AG04450 (cell line): ENCODE measurements at regions of chr2 and their contacts with region 1.

Region 1: DNA sequence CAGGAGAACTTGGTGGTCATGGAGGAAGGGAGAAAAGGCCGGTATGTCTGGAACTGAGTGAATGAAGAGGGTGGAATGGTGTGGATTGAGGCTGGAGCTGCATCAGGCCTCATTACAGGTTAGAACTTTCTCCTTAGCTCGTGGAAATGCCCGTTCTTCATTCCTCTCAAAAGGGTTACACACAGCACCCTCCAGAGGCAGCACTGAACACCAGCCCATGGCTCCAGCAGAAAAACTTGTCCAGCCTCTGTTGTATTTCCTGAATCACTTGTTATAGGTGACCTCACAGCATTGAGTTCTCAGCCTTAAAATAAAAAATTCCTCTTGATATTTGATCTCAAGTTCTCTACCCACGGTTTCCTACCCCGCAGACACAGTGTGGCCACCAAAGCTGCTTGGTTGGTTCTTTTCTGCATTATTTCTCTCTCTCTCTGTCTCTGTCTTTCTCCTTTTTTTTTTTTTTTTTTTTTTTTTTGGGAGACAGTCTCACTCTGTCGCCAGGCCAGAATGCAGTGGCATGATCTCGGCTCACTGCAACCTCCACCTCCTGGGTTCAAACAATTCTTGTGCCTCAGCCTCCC is 89.6 kb downstream of the ITGB1BP1 start:
- DNase-seq: peak; percentile 70
- H3K4me3 ChIP-seq: no peak overlapping the region
- H3K27ac ChIP-seq: peak overlapping the region; percentile 33
- H3K27me3 ChIP-seq: no peaks in the 10 kb centered on the region
- CTCF ChIP-seq: peak; percentile 84

Region 2: DNA sequence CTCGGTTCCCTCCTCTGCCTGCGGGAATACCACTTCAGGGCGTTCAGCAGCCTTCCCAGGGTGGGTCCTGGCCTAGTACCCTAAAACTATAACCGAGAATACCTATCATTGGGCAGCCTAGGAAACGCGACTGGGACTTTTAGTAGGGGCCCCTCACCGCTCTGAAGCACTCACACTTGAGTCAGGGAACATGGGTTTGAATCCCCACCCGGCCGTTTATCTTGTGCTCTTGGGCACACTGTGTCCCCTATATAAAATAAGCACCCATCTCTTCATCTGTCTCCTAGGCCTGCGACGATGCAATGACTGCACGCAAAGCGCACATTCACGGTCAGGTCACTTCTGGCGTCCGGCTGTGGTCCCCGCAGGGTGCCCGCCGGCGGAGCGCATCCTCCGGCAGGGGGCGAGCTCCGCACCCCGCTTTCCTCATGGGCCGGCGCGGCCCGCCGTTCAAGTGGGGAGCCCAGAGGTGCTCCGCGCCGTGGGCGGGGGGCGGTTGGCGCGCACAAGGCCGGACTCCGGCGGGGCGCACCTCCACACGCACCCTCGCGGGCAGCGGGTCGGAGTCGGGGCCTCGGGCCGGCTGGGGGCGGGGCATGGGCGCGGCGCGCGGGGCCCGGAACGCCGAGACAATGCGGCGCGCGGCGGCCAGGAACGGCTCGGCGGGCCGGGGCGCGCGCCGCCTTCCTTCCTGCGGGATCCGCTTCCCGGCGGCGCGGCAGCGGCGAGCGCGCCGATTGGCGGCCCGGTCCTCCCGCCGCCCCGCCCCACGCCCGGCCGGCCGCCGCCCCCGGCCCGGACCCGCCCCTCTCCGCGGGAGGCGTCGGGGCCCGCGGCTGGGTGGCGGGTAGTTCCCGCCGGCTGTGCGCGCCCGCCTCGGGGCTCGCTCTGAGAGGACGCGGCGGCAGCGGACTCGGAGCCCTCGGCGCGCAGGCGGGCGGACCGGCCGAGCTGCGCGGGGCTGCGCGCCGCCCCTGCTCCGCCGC is 127.4 kb before region 1 on chr2 and contains the start of gene ASAP2:
- CTCF ChIA-PET with region 1: interaction called, 11 read pairs
- POLR2A ChIA-PET with region 1: interaction called, 5 read pairs
- DNase-seq: no peak
- H3K4me3 ChIP-seq: peak within 1 kb of the TSS; percentile 81
- H3K27ac ChIP-seq: no peak within 1 kb of the TSS
- H3K27me3 ChIP-seq: no peaks in the 10 kb centered on the region
- CTCF ChIP-seq: peak; percentile 75
- polyA plus RNA-seq, gene ASAP2: 24.6 and 30.0 TPM in 2 replicates